Endothelial cell of umbilical vein (primary cell): ENCODE measurements at regions of chr20 and their contacts with region 1.

Region 1: GRCh38 chr20:48620519-48621254 is 207.1 kb downstream of the PREX1 start:
- DNase-seq: peak; percentile 85
- H3K4me3 ChIP-seq: peak overlapping the region in 1 of 3 experiments; percentile 43
- H3K27ac ChIP-seq: peak overlapping the region; percentile 42
- H3K4me1 ChIP-seq: peaks cover 12% of the 10 kb centered on the region
- H3K27me3 ChIP-seq: no peaks in the 10 kb centered on the region
- CTCF ChIP-seq: peak; percentile 83 to 95
- POLR2A ChIP-seq: no peak

Region 2: GRCh38 chr20:47196091-47197081 is 1424.3 kb before region 1 on chr20:
- CTCF ChIA-PET with region 1: interaction called, 18 read pairs
- POLR2A ChIA-PET with region 1: no interaction called
- dilution Hi-C with region 1: no loop called
- intact Hi-C with region 1: loop called (anchors 5 kb)
- DNase-seq: peak; percentile 63
- H3K4me3 ChIP-seq: no peak overlapping the region
- H3K27ac ChIP-seq: no peak overlapping the region
- H3K4me1 ChIP-seq: peaks cover 3% of the 10 kb centered on the region
- H3K27me3 ChIP-seq: peaks cover 0 to 2% of the 10 kb centered on the region in 2 experiments
- CTCF ChIP-seq: peak; percentile 95 to 98
- POLR2A ChIP-seq: no peak

Region 3: GRCh38 chr20:47663333-47664067 is 957.2 kb before region 1 on chr20:
- CTCF ChIA-PET with region 1: interaction called, 302 read pairs
- POLR2A ChIA-PET with region 1: no interaction called
- dilution Hi-C with region 1: no loop called
- intact Hi-C with region 1: loop called (anchors 1 kb)
- DNase-seq: peak; percentile 79
- H3K4me3 ChIP-seq: no peak overlapping the region
- H3K27ac ChIP-seq: no peak overlapping the region
- H3K4me1 ChIP-seq: peaks cover 7% of the 10 kb centered on the region
- H3K27me3 ChIP-seq: no peaks in the 10 kb centered on the region
- CTCF ChIP-seq: peak; percentile 94 to 96
- POLR2A ChIP-seq: no peak

Region 4: GRCh38 chr20:47691625-47692024 is 929.1 kb before region 1 on chr20:
- CTCF ChIA-PET with region 1: interaction called, 30 read pairs
- POLR2A ChIA-PET with region 1: no interaction called
- dilution Hi-C with region 1: no loop called
- intact Hi-C with region 1: no loop called
- DNase-seq: no peak
- H3K4me3 ChIP-seq: no peak overlapping the region
- H3K27ac ChIP-seq: no peak overlapping the region
- H3K4me1 ChIP-seq: no peaks in the 10 kb centered on the region
- H3K27me3 ChIP-seq: no peaks in the 10 kb centered on the region
- CTCF ChIP-seq: no peak
- POLR2A ChIP-seq: no peak

Region 5: DNA sequence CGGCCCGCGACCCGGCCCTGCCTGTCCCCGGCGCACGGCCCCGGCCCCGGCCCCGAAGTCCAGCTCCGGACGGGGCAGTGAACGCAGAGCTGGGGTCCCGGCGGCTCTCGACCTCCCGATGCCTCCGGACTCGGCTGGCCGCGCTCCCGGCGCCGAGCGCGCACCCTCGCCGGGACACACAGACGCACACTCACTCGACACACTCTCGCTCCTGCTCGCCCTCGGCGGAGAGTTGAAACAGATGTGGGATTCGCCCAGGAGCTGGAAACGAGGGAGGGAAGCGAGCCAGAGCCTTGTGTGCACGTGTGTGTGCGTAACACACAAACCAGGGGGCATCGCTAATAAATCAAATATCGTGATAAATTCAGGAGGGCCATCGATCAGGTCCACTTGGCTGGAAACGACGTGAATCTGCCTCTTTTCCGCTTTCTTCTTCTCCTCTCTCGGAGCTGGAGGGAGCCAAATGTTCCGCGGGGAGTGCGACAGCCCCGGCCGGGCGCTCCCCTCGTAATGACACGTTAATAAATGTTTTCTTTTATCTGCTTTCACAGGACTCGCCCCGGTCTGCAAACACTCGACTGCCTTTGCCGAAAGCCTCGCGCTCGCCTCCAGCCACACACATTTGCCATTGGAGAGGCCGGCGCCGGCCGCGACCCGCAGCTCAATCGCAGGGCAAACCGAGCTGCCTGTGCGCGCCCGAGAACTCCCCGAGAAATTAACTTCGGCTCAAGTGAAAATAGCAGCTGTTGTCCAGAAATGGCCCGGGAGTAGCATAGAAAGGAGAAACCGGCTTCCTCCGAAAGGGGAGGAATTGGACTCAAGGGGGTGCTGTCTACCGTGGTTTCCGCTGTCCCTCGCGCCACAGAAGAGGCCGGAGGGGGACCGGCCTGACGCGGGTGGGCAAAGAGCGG is 834.6 kb before region 1 on chr20:
- CTCF ChIA-PET with region 1: interaction called, 87 read pairs
- POLR2A ChIA-PET with region 1: interaction called, 3 read pairs
- dilution Hi-C with region 1: no loop called
- intact Hi-C with region 1: loop called (anchors 1 kb)
- DNase-seq: peak; percentile 85
- H3K4me3 ChIP-seq: peak overlapping the region; percentile 19 to 60 (median 46)
- H3K27ac ChIP-seq: peak overlapping the region; percentile 22
- H3K4me1 ChIP-seq: peaks cover 22% of the 10 kb centered on the region
- H3K27me3 ChIP-seq: peaks cover 0 to 3% of the 10 kb centered on the region in 2 experiments
- CTCF ChIP-seq: peak; percentile 58 to 73
- POLR2A ChIP-seq: no peak

Region 6: GRCh38 chr20:47973519-47974233 is 647.0 kb before region 1 on chr20:
- CTCF ChIA-PET with region 1: interaction called, 5 read pairs
- POLR2A ChIA-PET with region 1: no interaction called
- dilution Hi-C with region 1: no loop called
- intact Hi-C with region 1: loop called (anchors 5 kb)
- DNase-seq: peak; percentile 50
- H3K4me3 ChIP-seq: no peak overlapping the region
- H3K27ac ChIP-seq: peak overlapping the region; percentile 34
- H3K4me1 ChIP-seq: peaks cover 21% of the 10 kb centered on the region
- H3K27me3 ChIP-seq: no peaks in the 10 kb centered on the region
- CTCF ChIP-seq: no peak
- POLR2A ChIP-seq: no peak

Region 7: GRCh38 chr20:48635433-48636310 is 15.0 kb after region 1 on chr20:
- CTCF ChIA-PET with region 1: interaction called, 11 read pairs
- POLR2A ChIA-PET with region 1: no interaction called
- dilution Hi-C with region 1: no loop called
- intact Hi-C with region 1: no loop called
- DNase-seq: peak; percentile 55
- H3K4me3 ChIP-seq: no peak overlapping the region
- H3K27ac ChIP-seq: no peak overlapping the region
- H3K4me1 ChIP-seq: peaks cover 23% of the 10 kb centered on the region
- H3K27me3 ChIP-seq: no peaks in the 10 kb centered on the region
- CTCF ChIP-seq: peak; percentile 96 to 97
- POLR2A ChIP-seq: no peak